PC-3 (cell line): ENCODE measurements at regions of chr1 and their contacts with region 1.

Region 1: GRCh38 chr1:225474986-225475820 is 47.4 kb upstream of the LBR start:
- DNase-seq: peak; percentile 82
- ATAC-seq: peak; percentile 90
- H3K4me3 ChIP-seq: no peak overlapping the region; the same call in 1 of the 2 replicates
- H3K27ac ChIP-seq: no peak overlapping the region
- H3K4me1 ChIP-seq: peaks cover 10% of the 10 kb centered on the region; the same call in 1 of the 2 replicates
- H3K27me3 ChIP-seq: no peaks in the 10 kb centered on the region
- CTCF ChIP-seq: peak; percentile 100

Region 2: GRCh38 chr1:225554216-225554812 is 79.1 kb after region 1 on chr1:
- CTCF ChIA-PET with region 1: no interaction called
- POLR2A ChIA-PET with region 1: no interaction called
- intact Hi-C with region 1: loop called (anchors 5 kb)
- DNase-seq: peak; percentile 79
- ATAC-seq: peak; percentile 61; the same call in 1 of the 2 replicates
- H3K4me3 ChIP-seq: no peak overlapping the region
- H3K27ac ChIP-seq: no peak overlapping the region
- H3K4me1 ChIP-seq: no peaks in the 10 kb centered on the region
- H3K27me3 ChIP-seq: no peaks in the 10 kb centered on the region
- CTCF ChIP-seq: peak; percentile 81

Region 3: GRCh38 chr1:225845571-225846259 is 370.5 kb after region 1 on chr1:
- CTCF ChIA-PET with region 1: no interaction called
- POLR2A ChIA-PET with region 1: no interaction called
- intact Hi-C with region 1: loop called (anchors 2 kb)
- DNase-seq: peak; percentile 86
- ATAC-seq: peak; percentile 81
- H3K4me3 ChIP-seq: no peak overlapping the region
- H3K27ac ChIP-seq: no peak overlapping the region
- H3K4me1 ChIP-seq: no peaks in the 10 kb centered on the region
- H3K27me3 ChIP-seq: no peaks in the 10 kb centered on the region
- CTCF ChIP-seq: peak; percentile 92

Region 4: GRCh38 chr1:225977937-225978748 is 502.9 kb after region 1 on chr1:
- CTCF ChIA-PET with region 1: no interaction called
- POLR2A ChIA-PET with region 1: no interaction called
- intact Hi-C with region 1: loop called (anchors 1 kb)
- DNase-seq: no peak
- ATAC-seq: no peak
- H3K4me3 ChIP-seq: no peak overlapping the region
- H3K27ac ChIP-seq: no peak overlapping the region
- H3K4me1 ChIP-seq: peaks cover 2% of the 10 kb centered on the region; the same call in 1 of the 2 replicates
- H3K27me3 ChIP-seq: no peaks in the 10 kb centered on the region
- CTCF ChIP-seq: no peak